Sigmoid colon (tissue), 7 donors: ENCODE measurements at regions of chr3 and their contacts with region 1.

Region 1: GRCh38 chr3:57227204-57227929 is at the start of gene APPL1:
- DNase-seq: peak; percentile 95
- H3K4me3 ChIP-seq: peak within 1 kb of the TSS; percentile 69 to 88 (median 80)
- H3K27ac ChIP-seq: peak within 1 kb of the TSS; percentile 93 to 98 (median 96)
- H3K4me1 ChIP-seq: peaks cover 0 to 36% (median 26%) of the 10 kb centered on the region in 4 donors
- H3K27me3 ChIP-seq: no peaks in the 10 kb centered on the region
- CTCF ChIP-seq: no peak
- EP300 ChIP-seq: no peak
- POLR2A ChIP-seq: peak; percentile 83 to 86
- total RNA-seq, gene APPL1: 34.9 to 63.7 (median 54.3) TPM

Region 2: GRCh38 chr3:56556908-56557830 is 670.2 kb before region 1 on chr3 and contains the start of gene CCDC66:
- intact Hi-C with region 1: loop called (anchors 2 kb)
- DNase-seq: peak; percentile 97
- H3K4me3 ChIP-seq: peak within 1 kb of the TSS; percentile 64 to 79 (median 72)
- H3K27ac ChIP-seq: peak within 1 kb of the TSS; percentile 84 to 95 (median 88)
- H3K4me1 ChIP-seq: peaks cover 0 to 17% (median 15%) of the 10 kb centered on the region in 4 donors
- H3K27me3 ChIP-seq: no peaks in the 10 kb centered on the region
- CTCF ChIP-seq: peak in 3 of 4 experiments; percentile 54 to 70 (median 61)
- EP300 ChIP-seq: no peak
- POLR2A ChIP-seq: peak; percentile 90 to 91
- total RNA-seq, gene CCDC66: 27.7 to 86.1 (median 30.5) TPM

Region 3: DNA sequence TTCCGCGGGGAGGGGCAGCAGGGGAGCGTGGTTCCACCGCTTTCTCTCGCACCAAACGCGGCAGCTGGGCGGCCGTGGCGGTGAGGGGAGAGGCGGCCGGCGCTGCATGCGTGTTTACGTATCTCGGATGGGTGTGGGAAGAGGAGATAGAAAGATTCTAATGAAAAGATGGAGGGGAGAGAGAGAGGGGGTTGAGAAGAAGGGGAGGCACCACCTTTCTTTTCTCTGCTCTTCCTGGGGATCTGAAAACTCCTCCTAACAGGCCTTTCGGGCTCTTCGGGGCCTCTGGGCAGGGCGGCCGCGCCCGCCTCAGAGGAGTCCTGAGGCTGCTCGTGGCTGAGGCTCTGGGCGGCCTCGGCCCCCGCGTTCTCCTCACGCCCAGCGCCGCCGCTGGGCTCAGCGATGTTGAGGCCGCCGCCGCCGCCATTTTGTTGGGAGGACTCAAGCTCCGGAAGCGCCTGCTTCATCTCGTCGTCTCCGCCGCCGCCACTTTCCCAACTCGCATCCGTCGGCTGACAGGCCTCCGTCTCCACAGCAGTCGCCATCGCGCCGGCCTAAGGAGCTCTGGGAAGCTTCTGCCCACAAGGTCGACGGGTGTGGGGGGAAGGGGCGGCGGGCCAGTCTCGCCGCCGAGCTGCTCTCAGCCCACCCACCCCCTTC is 544.8 kb before region 1 on chr3:
- intact Hi-C with region 1: loop called (anchors 5 kb)
- DNase-seq: peak; percentile 88
- H3K4me3 ChIP-seq: peak overlapping the region; percentile 45 to 93 (median 88)
- H3K27ac ChIP-seq: peak overlapping the region; percentile 96 to 100 (median 100)
- H3K4me1 ChIP-seq: peaks cover 0 to 27% (median 18%) of the 10 kb centered on the region in 4 donors
- H3K27me3 ChIP-seq: no peaks in the 10 kb centered on the region
- CTCF ChIP-seq: no peak
- EP300 ChIP-seq: no peak
- POLR2A ChIP-seq: peak; percentile 6 to 64

Region 4: DNA sequence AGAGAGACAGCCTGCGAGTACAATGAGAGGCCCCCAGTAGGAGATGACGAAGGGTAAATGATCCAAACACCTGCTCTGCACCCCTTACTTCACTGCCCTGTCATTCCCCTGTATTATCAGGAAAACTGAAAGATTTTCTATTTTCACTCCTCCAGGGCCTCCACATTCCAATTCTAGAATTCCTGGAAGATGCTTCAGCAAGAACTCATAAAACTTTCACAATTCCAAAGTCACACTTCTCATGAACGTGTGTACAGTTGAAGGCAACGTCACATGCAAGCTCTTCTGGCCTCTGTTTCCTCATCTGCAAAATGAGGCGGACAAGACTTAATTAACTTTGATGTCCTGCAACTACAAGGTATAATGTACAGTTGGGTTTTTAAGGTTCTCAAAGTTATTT is 229.7 kb before region 1 on chr3:
- intact Hi-C with region 1: loop called (anchors 5 kb)
- DNase-seq: no peak
- H3K4me3 ChIP-seq: no peak overlapping the region
- H3K27ac ChIP-seq: peak overlapping the region; percentile 53 to 78 (median 72)
- H3K4me1 ChIP-seq: peaks cover 0 to 45% (median 29%) of the 10 kb centered on the region in 4 donors
- H3K27me3 ChIP-seq: no peaks in the 10 kb centered on the region
- CTCF ChIP-seq: no peak
- EP300 ChIP-seq: no peak
- POLR2A ChIP-seq: no peak

Region 5: DNA sequence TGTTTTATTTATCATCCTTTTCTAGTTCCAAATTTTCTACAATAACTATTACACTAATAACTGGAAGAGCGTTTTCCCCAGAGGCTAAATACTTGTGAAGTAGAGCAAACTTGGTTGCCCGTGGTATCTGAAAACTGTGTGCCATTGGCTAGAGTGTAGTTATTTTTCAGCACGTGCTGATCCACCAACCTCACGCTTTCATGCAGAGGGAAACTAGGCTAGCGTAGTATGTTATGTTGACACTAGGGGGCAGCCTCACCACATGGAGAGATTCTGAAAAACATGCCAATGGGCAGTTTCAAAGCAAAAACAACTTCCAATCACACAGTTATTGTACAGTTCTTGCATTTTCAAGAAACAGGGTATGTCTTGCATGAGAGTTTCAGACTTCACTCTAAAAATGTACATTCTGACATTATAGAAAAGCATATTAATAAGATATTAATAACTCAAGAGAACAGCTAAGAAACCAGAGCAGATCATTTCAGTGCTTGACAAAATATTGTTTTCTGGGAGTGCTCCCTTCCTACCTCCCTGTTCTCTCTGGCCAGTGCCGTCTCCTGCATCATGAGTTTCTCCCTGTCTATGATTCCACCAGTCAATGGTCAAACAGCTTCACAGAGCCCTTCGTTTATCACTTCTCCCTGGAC is 127.2 kb before region 1 on chr3:
- intact Hi-C with region 1: loop called (anchors 2 kb)
- DNase-seq: peak; percentile 85
- H3K4me3 ChIP-seq: no peak overlapping the region
- H3K27ac ChIP-seq: no peak overlapping the region
- H3K4me1 ChIP-seq: peaks cover 0 to 5% (median 2%) of the 10 kb centered on the region in 4 donors
- H3K27me3 ChIP-seq: no peaks in the 10 kb centered on the region
- CTCF ChIP-seq: peak; percentile 86 to 94 (median 88)
- EP300 ChIP-seq: no peak
- POLR2A ChIP-seq: no peak

Region 6: DNA sequence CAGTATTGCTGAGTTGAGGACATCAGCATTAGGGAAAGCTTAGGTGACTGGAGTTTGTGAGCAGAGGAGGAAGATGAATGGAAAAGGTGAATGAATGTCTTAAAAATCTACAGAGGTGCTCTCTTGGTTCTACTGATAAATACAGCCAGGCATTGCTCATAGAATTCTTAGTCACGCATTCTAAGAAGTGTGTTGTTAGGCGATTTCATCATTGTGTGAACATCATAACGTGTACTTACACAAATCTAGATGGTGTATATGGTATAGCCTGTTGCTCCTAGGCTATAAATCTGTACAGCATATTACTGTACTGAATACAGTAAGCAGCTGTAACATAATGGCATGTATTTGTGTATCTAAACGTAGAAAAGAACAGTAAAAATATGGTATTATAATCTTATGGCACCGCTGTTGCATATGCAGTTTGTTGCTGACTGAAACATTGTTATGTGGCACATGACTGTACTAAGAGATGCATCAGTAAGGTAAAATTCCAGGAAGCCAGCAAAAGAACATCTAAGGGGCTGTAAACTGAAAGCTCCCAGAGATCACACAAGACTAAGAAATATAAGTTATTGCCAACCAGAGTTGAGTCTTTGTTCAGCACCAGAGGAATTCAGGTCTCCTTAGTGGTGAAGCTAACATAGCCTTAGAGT is 108.0 kb after region 1 on chr3:
- intact Hi-C with region 1: no loop called
- DNase-seq: no peak
- H3K4me3 ChIP-seq: no peak overlapping the region
- H3K27ac ChIP-seq: no peak overlapping the region
- H3K4me1 ChIP-seq: no peaks in the 10 kb centered on the region
- H3K27me3 ChIP-seq: no peaks in the 10 kb centered on the region
- CTCF ChIP-seq: no peak
- EP300 ChIP-seq: no peak
- POLR2A ChIP-seq: no peak